ENCODE measurements at regions of chr12 and their contacts with region 1.

Region 1: DNA sequence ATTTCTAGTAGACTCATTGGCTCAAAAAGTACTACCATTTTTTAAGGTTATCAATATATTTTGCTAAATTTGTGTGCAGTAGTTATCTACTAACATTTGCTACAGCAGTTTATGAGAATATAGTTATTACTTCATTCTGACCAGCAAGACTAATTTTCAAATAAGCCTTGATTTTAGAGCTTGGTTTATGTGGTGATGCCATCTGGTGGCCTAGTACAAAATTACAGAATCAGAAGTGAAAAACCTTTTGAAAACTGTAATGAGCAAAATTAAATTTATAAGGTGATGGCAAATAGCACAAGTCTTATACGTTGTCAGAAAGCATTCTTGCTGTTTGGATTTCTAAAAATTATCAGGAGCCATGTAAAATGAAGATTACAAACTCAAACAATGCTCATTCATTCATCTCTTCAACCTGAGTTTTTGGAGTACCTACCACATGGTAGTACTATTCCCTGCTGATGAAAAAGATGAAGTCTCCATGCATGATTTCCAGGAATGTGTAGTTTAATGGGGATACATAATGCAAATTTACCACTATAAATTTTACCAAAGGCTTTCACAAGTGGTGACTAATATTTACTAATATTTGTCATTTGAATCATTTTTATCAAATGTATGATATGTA is 51.0 kb downstream of the MAGOHB start:
- DNase-seq: no peak
- ATAC-seq: no peak

Region 2: GRCh38 chr12:10153271-10154144 is 408.9 kb before region 1 on chr12:
- intact Hi-C with region 1: loop called in 1 of 2 experiments (anchors 5 kb)
- DNase-seq: peak; percentile 72
- ATAC-seq: peak; percentile 92 to 95

Region 3: GRCh38 chr12:10235761-10236631 is 326.4 kb before region 1 on chr12:
- intact Hi-C with region 1: loop called (anchors 2 to 5 kb)
- DNase-seq: peak; percentile 37
- ATAC-seq: peak; percentile 77 to 81

Region 4: DNA sequence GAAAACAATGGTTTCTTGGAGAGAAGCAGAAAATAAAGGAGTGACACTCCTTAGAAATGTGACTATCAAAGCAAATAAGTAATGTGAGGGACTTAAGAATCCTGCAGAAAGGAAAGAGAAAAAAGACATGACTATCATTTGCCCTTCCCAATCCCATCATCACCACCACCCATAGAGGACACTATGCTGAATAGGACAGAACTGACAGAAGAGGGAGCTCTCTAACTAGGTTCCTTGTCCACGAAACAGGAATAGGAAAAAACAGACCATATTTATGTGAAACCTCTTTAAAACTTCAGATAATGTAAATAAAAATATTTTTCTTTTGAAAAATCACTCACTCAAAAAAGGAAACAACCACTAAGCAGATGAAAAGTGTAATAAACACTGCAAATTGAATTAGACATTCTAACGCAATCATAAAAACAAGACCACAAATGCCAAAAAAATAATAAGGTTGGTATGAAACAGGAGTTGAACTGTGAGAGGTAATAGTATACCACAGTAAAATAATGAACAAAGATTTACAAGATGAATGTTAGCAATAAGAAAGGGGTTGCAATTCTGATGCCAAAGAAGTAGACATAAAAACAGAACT is 230.7 kb before region 1 on chr12:
- intact Hi-C with region 1: loop called (anchors 2 to 5 kb)
- DNase-seq: no peak
- ATAC-seq: peak; percentile 70 to 74